Common myeloid progenitor, CD34-positive (primary cell): ENCODE measurements at regions of chr20 and their contacts with region 1.

Region 1: GRCh38 chr20:64079273-64080012 is at the start of gene RGS19:
- DNase-seq: peak; percentile 86 to 95 (median 95)
- H3K4me3 ChIP-seq: peak within 1 kb of the TSS; percentile 58 to 92 (median 79)
- H3K27ac ChIP-seq: peak within 1 kb of the TSS; percentile 33 to 81
- H3K4me1 ChIP-seq: peaks cover 0 to 90% (median 83%) of the 10 kb centered on the region in 4 experiments
- H3K27me3 ChIP-seq: no peaks in the 10 kb centered on the region

Region 2: DNA sequence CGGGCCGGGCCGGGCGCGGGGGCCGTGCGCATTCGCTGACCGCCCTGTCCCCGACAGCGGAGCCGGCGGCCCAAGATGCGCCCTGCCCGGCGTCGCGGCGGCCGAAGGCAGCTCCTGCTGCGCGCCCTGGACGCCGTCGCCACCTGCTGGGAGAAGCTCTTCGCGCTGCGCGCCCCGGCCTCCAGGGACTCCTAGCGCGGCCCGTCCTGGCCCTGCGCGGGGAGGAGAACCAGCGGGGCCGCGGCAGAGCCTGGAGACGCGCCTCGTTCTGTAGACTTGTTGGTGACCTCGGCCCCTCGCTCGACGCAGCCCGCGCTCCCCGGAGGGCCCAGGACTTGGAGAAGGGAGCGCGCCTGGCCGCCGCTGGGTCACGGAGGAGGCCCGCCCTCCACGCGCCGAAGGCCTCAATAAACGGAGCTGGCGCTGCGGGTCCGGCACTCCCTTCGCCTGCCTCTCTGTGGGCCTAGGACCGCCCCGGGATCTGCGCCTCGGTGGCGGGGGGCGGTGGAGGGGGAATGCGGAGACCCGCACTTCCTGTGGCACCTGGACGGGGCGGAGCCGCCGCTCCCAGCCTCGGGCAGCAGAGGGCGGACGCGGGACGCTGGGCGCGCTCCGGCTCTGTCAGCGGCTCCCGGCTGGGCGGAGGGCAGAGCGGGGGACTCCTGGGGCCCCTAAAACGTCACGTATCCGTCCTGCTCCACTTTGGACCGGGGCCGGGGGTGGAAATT is 40.7 kb before region 1 on chr20:
- CTCF ChIA-PET with region 1: interaction called, 11 read pairs
- POLR2A ChIA-PET with region 1: interaction called, 9 read pairs
- DNase-seq: peak; percentile 60 to 80 (median 72)
- H3K4me3 ChIP-seq: peak overlapping the region; percentile 21 to 78 (median 49)
- H3K27ac ChIP-seq: no peak overlapping the region
- H3K4me1 ChIP-seq: peaks cover 10 to 69% (median 63%) of the 10 kb centered on the region in 4 experiments
- H3K27me3 ChIP-seq: peaks cover 0 to 8% (median 2%) of the 10 kb centered on the region in 5 experiments

Region 3: DNA sequence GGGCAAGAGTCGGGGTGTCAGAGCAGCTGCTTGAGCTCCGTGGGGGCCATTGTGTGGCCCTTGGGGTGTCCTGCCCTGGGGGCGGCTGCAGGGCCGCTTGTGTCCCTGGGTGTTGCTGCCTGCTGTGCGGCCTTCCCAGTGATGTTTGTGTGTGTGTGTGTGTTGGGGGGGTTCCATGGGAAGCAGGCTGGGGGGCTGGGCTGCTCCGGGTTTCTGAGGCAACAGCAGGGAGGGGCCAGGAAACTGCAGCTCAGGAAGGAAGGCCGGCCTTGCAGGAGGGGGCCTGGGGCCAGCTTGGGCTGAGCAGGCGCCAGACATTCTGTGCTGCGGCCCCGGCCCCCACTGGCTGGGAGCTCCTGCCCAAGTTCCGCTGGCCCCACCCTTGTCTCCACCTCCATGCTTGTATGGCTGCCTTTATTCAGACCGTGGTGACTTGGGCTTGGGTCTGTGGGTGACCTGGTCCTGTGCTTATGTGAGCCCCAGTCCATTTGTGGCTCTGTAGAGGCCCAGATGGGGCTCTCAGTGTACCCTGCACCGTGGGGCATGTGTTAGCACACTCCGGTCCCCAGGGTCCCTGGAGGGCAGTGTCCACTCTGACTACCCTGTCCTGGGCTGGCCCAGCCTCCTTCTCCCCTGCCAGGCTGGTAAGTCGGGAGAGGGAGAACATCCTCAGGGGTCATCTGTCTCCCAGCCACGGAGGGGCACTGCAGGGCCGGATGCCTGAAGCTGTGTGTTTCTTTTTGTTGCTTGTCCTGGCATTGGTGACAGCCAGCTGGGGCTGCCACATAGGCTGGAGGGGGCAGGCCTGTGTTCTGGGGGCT is 25.4 kb before region 1 on chr20:
- CTCF ChIA-PET with region 1: interaction called, 12 read pairs
- POLR2A ChIA-PET with region 1: interaction called, 3 read pairs
- DNase-seq: peak in 2 of 3 donors; percentile 51 to 52
- H3K4me3 ChIP-seq: peak overlapping the region in 5 of 7 experiments; percentile 3 to 59 (median 48)
- H3K27ac ChIP-seq: peak overlapping the region in 1 of 2 experiments; percentile 34
- H3K4me1 ChIP-seq: peaks cover 2 to 87% (median 80%) of the 10 kb centered on the region in 4 experiments
- H3K27me3 ChIP-seq: peaks cover 0 to 12% (median 0%) of the 10 kb centered on the region in 5 experiments

Region 4: DNA sequence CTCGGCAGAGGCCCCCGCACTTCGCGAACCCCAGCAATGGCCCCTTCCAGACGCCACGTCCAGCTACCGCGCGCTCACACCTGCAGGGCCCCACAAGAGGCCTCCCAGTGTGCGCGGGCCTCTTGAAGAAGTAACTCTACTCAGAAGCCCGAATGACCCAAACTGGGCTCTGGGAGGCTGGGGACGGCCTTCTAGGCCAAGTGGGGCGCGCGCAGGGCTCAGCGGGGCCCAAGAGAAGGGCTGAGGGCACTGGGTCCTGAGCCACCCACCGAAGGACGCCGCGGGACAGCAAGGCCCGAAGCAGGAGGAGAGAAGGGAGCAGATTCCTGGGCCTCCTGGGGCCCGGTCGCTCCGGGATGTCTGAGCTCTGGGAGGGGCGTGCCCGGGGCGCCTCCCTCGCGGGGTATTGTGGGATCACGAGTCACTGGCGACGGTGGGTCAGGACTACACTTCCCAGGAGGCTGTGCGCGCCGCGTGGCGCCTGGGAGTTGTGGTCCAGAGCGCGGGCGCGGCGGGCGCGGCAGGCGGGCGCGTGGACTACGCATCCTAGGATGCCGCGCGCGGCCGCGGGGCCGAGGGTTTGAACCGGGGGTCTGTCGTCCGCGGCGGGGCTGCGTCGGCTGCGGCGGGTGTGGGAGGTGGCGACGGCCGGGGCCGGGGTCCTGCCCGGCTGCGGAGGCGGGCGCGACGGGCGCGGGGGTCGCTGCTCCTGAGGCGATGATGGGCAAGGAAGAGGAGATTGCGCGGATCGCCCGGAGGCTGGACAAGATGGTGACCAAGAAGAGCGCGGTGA is 16.7 kb before region 1 on chr20 and contains the start of gene TCEA2:
- CTCF ChIA-PET with region 1: interaction called, 43 read pairs
- POLR2A ChIA-PET with region 1: interaction called, 4 read pairs
- DNase-seq: peak; percentile 89 to 94 (median 93)
- H3K4me3 ChIP-seq: peak within 1 kb of the TSS; percentile 58 to 83 (median 76)
- H3K27ac ChIP-seq: peak within 1 kb of the TSS; percentile 33 to 83
- H3K4me1 ChIP-seq: peaks cover 2 to 61% (median 56%) of the 10 kb centered on the region in 4 experiments
- H3K27me3 ChIP-seq: no peaks in the 10 kb centered on the region

Region 5: GRCh38 chr20:64101731-64102621 is 22.5 kb after region 1 on chr20:
- CTCF ChIA-PET with region 1: interaction called, 28 read pairs
- POLR2A ChIA-PET with region 1: no interaction called
- DNase-seq: peak in 2 of 3 donors; percentile 81 to 83
- H3K4me3 ChIP-seq: peak overlapping the region; percentile 6 to 81 (median 67)
- H3K27ac ChIP-seq: no peak overlapping the region
- H3K4me1 ChIP-seq: peaks cover 0 to 17% (median 14%) of the 10 kb centered on the region in 4 experiments
- H3K27me3 ChIP-seq: peaks cover 0 to 3% (median 0%) of the 10 kb centered on the region in 5 experiments

Region 6: DNA sequence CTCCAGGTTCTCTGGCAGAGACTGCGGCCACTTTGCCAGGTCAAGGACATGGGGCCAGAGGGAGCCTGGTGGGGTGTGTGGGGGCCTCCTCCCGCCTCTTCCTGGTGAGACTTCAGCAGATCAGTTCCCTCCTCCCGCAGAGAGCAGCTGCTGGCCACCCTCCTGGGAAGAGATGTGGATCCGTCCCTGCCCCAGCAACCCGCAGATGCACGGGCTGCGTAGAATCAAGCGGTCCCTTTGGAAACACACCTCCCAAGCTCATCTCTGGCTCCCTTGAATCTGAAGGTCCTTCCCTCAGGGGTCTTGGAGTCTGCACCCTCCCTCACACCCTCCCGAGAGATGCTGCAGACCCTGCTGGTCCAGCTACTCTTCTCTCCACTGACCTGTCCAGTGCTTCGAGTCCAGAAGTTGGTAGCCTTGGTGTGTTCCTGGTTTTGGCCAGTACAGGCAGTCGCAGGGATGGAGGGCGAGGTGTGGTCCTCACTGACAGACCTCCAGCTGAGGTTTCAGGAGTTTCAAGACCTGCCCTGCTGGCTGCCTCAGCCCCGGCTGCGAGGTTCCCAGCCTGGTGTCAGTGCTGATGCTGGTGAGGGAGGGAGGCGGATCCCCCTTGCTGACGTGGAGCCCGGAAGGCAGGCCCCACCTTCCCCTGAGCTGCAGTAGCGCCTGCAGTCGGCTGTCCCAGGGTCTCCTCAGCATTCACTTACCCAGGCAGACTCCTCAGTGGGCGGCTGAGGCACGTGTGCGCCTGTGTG is 27.7 kb after region 1 on chr20 and contains the start of gene NPBWR2:
- CTCF ChIA-PET with region 1: interaction called, 28 read pairs
- POLR2A ChIA-PET with region 1: no interaction called
- DNase-seq: peak; percentile 63 to 84 (median 79)
- H3K4me3 ChIP-seq: peak within 1 kb of the TSS in 2 of 7 experiments; percentile 44 to 53
- H3K27ac ChIP-seq: no peak within 1 kb of the TSS
- H3K4me1 ChIP-seq: peaks cover 0 to 55% (median 34%) of the 10 kb centered on the region in 4 experiments
- H3K27me3 ChIP-seq: peaks cover 0 to 3% (median 0%) of the 10 kb centered on the region in 5 experiments